Heart left ventricle (tissue), 16 donors: ENCODE measurements at regions of chr7 and their contacts with region 1.

Region 1: GRCh38 chr7:101602484-101603241 is 26.4 kb downstream of the MYL10 start:
- DNase-seq: peak; percentile 71 to 87 (median 75)
- ATAC-seq: peak; percentile 75 to 95 (median 84)
- H3K4me3 ChIP-seq: no peak overlapping the region
- H3K27ac ChIP-seq: no peak overlapping the region
- H3K4me1 ChIP-seq: peaks cover 0 to 8% (median 0%) of the 10 kb centered on the region in 12 donors
- H3K27me3 ChIP-seq: peaks cover 0 to 6% (median 0%) of the 10 kb centered on the region in 9 donors
- CTCF ChIP-seq: peak; percentile 77 to 95 (median 89)
- POLR2A ChIP-seq: no peak

Region 2: DNA sequence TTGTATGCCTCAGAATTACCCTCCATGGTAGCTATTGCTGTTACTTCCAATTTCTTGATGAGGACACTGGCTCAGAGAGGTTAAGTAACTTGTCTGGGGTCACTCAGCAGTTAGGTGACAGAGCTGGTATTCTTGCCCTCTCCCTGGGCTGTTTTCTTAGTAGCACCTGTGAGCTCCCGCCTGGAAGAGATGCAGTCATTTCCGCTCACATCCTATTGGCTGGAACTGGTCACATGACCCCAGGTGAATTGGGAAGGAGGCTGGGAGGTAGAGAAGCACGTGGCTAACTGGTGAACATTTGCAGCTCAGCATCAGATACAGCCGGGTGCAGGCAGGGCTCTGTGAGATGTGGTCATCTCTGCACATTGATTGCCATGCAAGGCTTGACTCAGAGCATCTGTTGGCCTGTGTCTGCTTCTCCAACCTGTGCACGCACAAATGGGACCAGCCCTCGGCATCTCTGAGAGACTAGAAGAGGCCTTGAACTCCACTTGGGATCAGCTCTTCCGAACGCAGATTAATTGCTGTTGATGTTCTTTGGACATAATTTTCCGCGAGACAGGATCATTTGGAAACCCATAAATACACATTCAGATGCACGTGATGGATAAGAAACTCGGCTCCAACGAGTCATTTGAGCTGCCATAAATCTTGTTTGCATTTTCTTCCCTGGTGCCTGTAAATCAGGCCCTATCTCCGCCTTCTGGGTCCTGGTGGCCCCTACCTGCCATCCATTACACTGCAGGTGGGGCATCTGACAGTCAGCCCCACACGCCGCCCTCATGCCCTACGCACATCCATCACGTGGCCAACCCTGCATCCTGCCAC is 16.4 kb before region 1 on chr7:
- intact Hi-C with region 1: no loop called
- DNase-seq: no peak
- ATAC-seq: no peak
- H3K4me3 ChIP-seq: no peak overlapping the region
- H3K27ac ChIP-seq: no peak overlapping the region
- H3K4me1 ChIP-seq: no peaks in the 10 kb centered on the region
- H3K27me3 ChIP-seq: peaks cover 0 to 10% (median 0%) of the 10 kb centered on the region in 9 donors
- CTCF ChIP-seq: no peak
- POLR2A ChIP-seq: no peak

Region 3: GRCh38 chr7:101644879-101645278 is 42.2 kb after region 1 on chr7:
- intact Hi-C with region 1: no loop called
- DNase-seq: no peak
- ATAC-seq: peak in 1 of 4 donors; percentile 42
- H3K4me3 ChIP-seq: no peak overlapping the region
- H3K27ac ChIP-seq: no peak overlapping the region
- H3K4me1 ChIP-seq: peaks cover 0 to 3% (median 0%) of the 10 kb centered on the region in 12 donors
- H3K27me3 ChIP-seq: no peaks in the 10 kb centered on the region
- CTCF ChIP-seq: no peak
- POLR2A ChIP-seq: no peak

Region 4: DNA sequence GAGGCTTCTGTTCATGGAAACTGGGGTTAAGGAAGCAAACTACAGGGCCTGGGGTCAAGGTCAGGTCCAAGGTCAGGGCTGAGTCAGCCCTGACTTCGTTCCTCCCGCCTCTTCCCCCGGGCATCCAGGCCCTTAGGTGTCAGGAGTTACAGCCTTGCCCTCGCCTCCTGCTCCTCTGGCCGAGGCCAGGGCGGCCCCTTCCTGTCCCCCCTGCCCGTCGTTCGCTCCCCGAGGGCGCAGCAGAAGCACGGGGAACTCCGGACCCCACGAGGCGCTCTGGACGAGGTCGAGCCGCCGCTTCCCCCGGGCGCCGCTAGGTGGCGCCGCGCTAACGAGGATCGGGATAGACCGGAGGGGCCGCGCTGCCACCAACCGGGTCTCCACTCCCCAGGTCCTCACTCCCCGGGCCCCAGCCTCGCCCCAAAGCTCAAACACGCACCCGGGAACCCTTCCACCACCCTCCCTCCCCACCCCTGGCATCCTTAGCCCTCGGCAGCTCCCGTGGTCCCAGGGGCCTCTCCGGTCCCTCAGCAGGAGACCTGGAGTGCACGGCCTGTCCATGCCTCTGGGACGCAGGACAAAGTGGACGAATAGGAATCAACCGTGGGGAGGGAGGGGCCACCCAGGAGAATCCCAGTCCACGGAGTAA is 85.6 kb after region 1 on chr7:
- intact Hi-C with region 1: loop called in 1 of 10 experiments (anchors 5 kb)
- DNase-seq: peak; percentile 73 to 92 (median 80)
- ATAC-seq: peak; percentile 58 to 91 (median 87)
- H3K4me3 ChIP-seq: peak overlapping the region in 9 of 12 donors; percentile 11 to 34 (median 31)
- H3K27ac ChIP-seq: peak overlapping the region in 1 of 12 donors; percentile 31
- H3K4me1 ChIP-seq: peaks cover 0 to 19% (median 10%) of the 10 kb centered on the region in 12 donors
- H3K27me3 ChIP-seq: no peaks in the 10 kb centered on the region
- CTCF ChIP-seq: peak; percentile 92 to 99 (median 96)
- POLR2A ChIP-seq: no peak

Region 5: GRCh38 chr7:101729241-101729993 is 126.8 kb after region 1 on chr7:
- intact Hi-C with region 1: no loop called
- DNase-seq: no peak
- ATAC-seq: peak in 1 of 4 donors; percentile 35
- H3K4me3 ChIP-seq: no peak overlapping the region
- H3K27ac ChIP-seq: no peak overlapping the region
- H3K4me1 ChIP-seq: peaks cover 0 to 11% (median 4%) of the 10 kb centered on the region in 12 donors
- H3K27me3 ChIP-seq: no peaks in the 10 kb centered on the region
- CTCF ChIP-seq: no peak
- POLR2A ChIP-seq: no peak

Region 6: GRCh38 chr7:102248456-102249395 is 646.1 kb after region 1 on chr7:
- intact Hi-C with region 1: loop called in 1 of 10 experiments (anchors 10 kb)
- DNase-seq: no peak
- ATAC-seq: no peak
- H3K4me3 ChIP-seq: no peak overlapping the region
- H3K27ac ChIP-seq: no peak overlapping the region
- H3K4me1 ChIP-seq: no peaks in the 10 kb centered on the region
- H3K27me3 ChIP-seq: no peaks in the 10 kb centered on the region
- CTCF ChIP-seq: no peak
- POLR2A ChIP-seq: no peak

Region 7: DNA sequence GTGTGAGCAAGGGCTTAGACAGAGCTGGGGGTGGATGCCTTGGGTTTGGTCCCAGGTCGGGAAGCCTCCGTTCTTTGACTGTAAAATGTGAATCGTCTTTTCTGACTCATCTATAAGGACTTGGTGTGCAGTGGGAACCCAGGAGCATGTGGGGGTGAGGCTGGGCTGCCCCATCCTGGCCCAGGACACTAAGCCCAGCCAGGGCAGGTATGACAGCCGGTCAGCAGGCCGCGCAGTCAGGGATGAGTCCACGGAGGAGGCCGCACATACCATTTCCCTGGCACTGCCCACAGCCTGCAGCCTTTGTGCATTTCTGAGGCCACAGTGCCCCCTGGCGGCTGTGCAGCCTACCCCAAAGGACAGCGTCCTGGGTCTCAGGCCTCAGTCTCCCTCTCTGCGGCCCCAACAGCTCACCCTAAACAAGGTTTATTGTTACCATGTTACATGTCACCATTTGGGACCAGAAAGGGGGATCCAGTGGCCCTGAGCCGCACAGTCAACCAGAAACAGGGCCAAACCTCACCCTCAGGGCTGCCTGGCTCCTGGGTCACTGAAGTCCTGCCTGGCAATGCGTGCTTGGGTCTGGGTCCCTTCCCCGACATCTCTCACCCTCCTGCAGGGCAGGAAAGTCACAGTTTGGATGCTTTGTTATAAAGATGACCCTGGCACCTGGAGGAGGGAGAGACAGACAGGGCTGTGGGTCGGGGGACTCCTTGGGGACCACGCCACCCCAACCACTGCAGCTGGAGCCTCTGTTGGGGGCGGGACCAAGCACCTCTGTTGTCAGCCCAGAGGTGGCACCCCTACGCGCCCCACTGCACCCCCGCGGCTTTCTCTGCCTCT is 669.6 kb after region 1 on chr7:
- intact Hi-C with region 1: loop called in 9 of 10 experiments (anchors 1 to 10 kb)
- DNase-seq: peak; percentile 69 to 88 (median 76)
- ATAC-seq: peak; percentile 86 to 90 (median 88)
- H3K4me3 ChIP-seq: no peak overlapping the region
- H3K27ac ChIP-seq: no peak overlapping the region
- H3K4me1 ChIP-seq: peaks cover 0 to 4% (median 0%) of the 10 kb centered on the region in 12 donors
- H3K27me3 ChIP-seq: no peaks in the 10 kb centered on the region
- CTCF ChIP-seq: peak; percentile 85 to 93 (median 88)
- POLR2A ChIP-seq: no peak

Region 8: DNA sequence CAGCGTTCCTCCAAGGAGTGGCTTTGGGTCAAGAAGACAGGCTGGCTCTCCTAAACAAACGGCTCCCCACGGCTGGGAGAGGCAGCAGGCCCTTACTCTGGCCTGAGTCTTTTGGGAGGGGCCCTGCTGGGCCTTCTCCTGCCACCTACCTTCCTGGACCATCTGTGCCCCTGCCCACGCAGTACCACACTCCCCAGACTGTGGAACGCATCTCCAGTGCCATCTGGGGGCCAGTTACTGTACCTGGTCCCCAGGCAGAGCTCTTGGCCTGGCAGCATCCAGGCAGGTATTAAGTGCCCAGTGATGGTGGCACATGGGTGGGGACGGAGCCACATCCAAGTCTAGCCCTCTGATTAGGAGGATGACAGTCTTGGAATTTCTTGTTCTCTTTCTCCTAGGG is 847.6 kb after region 1 on chr7:
- intact Hi-C with region 1: no loop called
- DNase-seq: no peak
- ATAC-seq: no peak
- H3K4me3 ChIP-seq: no peak overlapping the region
- H3K27ac ChIP-seq: no peak overlapping the region
- H3K4me1 ChIP-seq: peaks cover 0 to 11% (median 0%) of the 10 kb centered on the region in 12 donors
- H3K27me3 ChIP-seq: no peaks in the 10 kb centered on the region
- CTCF ChIP-seq: peak in 1 of 12 donors; percentile 19
- POLR2A ChIP-seq: no peak